Mammary epithelial cell (primary cell): ENCODE measurements at regions of chr3 and their contacts with region 1.

Region 1: DNA sequence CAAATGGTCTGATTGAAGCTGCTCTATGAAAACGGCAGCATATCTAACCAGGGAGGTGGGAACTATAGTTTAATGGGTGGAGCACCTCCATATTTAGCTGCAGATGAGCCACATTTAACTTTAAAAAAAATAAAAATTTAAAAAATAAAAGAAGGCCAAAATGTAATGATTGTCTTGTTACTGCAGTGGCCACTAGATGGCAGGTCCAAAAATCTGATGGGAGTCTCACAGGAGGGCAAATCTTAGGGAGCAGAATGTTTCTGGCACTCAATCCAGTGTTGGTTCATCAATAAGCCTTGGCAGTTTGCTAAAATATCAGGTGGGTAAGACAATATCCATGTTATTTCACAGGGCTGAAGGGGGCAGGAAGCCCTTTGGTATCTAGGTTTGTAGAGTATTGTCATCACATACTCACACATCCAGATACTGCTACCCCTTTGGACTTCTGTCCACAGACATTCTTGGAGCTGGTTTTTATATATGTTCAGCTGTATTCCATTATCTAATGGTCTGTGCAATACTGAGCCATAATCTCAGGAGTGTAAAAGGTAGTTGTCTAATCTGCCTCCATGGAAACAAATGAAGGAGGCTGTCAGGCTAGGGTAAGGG is 233.3 kb downstream of the TIGIT start:
- DNase-seq: peak; percentile 17
- H3K4me3 ChIP-seq: no peak overlapping the region
- H3K27ac ChIP-seq: no peak overlapping the region
- H3K4me1 ChIP-seq: no peaks in the 10 kb centered on the region
- H3K27me3 ChIP-seq: no peaks in the 10 kb centered on the region
- CTCF ChIP-seq: peak; percentile 62 to 65

Region 2: GRCh38 chr3:114128826-114129465 is 398.2 kb before region 1 on chr3:
- CTCF ChIA-PET with region 1: no interaction called
- dilution Hi-C with region 1: no loop called
- in situ Hi-C with region 1: no loop called
- intact Hi-C with region 1: no loop called
- DNase-seq: no peak
- H3K4me3 ChIP-seq: no peak overlapping the region
- H3K27ac ChIP-seq: no peak overlapping the region
- H3K4me1 ChIP-seq: no peaks in the 10 kb centered on the region
- H3K27me3 ChIP-seq: no peaks in the 10 kb centered on the region
- CTCF ChIP-seq: no peak

Region 3: GRCh38 chr3:114428043-114428595 is 99.0 kb before region 1 on chr3:
- CTCF ChIA-PET with region 1: no interaction called
- dilution Hi-C with region 1: no loop called
- in situ Hi-C with region 1: no loop called
- intact Hi-C with region 1: no loop called
- DNase-seq: no peak
- H3K4me3 ChIP-seq: no peak overlapping the region
- H3K27ac ChIP-seq: no peak overlapping the region
- H3K4me1 ChIP-seq: no peaks in the 10 kb centered on the region
- H3K27me3 ChIP-seq: no peaks in the 10 kb centered on the region
- CTCF ChIP-seq: no peak

Region 4: DNA sequence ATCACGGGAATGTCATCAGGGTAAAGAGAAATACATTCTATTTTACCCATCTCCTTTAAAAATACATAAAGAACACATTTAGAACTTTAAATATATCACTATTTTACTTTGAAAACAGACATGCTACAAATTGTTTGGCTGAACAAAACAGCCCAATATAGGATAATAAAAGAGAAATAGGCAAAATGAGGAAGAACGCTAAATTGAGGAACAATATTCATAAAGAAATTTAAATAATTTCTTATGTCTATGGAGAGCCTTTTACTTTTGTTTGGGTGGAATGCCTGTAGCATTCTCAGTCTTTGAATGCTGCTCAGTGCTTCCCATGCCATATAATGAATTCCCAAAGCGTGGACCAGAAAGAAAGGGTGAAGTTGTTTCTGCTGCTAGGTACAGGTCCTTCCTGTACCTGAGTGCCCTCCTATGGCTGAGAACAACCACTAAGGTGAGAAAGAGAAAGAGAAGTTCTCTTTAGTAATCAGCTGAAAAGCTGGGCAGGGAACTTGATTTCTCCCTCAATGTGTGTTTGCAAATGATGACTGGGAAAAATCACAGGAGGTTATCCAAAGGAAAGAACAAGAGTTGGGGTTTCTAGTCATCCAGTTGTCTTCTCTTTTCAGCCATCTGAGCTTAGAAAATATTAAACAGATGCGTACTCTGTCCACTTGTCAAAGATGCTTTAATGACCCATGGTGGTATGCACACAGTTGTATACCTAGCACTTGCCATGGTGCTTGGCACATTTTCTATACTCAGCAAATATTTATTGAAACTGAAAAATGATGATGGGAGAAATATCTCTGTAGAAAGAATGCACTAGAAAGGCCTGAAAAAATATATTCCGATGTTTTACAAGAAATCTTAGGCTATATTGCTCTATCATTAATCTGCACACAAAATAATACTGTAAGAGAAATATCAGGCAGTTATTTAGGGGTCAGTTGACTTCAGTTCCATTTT is 171.3 kb after region 1 on chr3:
- CTCF ChIA-PET with region 1: no interaction called
- dilution Hi-C with region 1: no loop called
- in situ Hi-C with region 1: no loop called
- intact Hi-C with region 1: loop called (anchors 1 kb)
- DNase-seq: no peak
- H3K4me3 ChIP-seq: no peak overlapping the region
- H3K27ac ChIP-seq: no peak overlapping the region
- H3K4me1 ChIP-seq: no peaks in the 10 kb centered on the region
- H3K27me3 ChIP-seq: no peaks in the 10 kb centered on the region
- CTCF ChIP-seq: peak in 1 of 2 donors; percentile 35

Region 5: GRCh38 chr3:114939920-114940319 is 412.8 kb after region 1 on chr3:
- CTCF ChIA-PET with region 1: no interaction called
- dilution Hi-C with region 1: no loop called
- in situ Hi-C with region 1: no loop called
- intact Hi-C with region 1: no loop called
- DNase-seq: no peak
- H3K4me3 ChIP-seq: no peak overlapping the region
- H3K27ac ChIP-seq: no peak overlapping the region
- H3K4me1 ChIP-seq: no peaks in the 10 kb centered on the region
- H3K27me3 ChIP-seq: no peaks in the 10 kb centered on the region
- CTCF ChIP-seq: no peak